CD8-positive, alpha-beta T cell (primary cell): ENCODE measurements at regions of chr12 and their contacts with region 1.

Region 1: DNA sequence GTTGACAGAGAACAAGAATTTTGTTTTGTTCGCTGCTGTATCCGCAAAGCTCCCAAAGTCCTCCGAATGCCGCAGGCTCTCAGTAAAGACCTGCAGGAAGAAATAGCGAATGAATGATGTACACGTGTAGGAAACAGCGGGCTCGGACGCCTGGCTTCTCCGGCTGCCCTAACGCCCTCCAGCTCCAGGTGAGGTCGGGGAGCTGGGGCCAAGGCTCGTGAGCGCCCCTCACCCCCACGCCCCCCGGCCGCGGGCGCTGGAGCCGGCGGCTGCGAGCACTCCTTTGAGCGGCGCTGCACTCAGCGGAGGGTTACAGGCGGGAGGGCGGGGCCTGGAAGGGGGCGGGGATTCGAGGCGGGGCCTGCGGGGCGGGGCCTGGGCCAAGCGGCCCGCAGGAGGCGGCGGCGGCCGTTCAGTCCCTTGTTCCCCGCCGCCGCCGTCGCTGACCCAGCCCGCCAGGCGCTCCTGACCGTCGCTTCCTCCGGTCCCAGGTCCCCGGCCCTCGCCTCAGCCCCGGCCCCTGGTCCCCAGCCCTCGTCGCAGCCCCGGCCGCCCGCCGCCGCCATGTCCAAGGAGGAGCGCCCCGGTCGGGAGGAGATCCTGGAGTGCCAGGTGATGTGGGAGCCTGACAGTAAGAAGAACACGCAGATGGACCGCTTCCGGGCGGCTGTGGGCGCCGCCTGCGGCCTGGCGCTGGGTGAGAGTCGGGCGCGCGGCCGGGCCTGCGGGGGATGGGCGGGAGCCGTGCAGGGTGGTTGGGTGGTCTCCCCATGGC is at the start of gene AACS:
- DNase-seq: peak; percentile 59 to 85 (median 74)
- ATAC-seq: peak; percentile 96
- H3K4me3 ChIP-seq: peak within 1 kb of the TSS; percentile 67 to 98
- H3K4me3 Mint-ChIP-seq: peak within 1 kb of the TSS; percentile 86
- H3K27ac ChIP-seq: peak within 1 kb of the TSS; percentile 25 to 33
- H3K27ac Mint-ChIP-seq: peak within 1 kb of the TSS; percentile 69
- H3K4me1 ChIP-seq: peaks cover 10% of the 10 kb centered on the region
- H3K4me1 Mint-ChIP-seq: peaks cover 21% of the 10 kb centered on the region
- H3K27me3 ChIP-seq: no peaks in the 10 kb centered on the region
- H3K27me3 Mint-ChIP-seq: peaks cover 1% of the 10 kb centered on the region
- CTCF ChIP-seq: no peak
- total RNA-seq, gene AACS: 11.0 to 12.3 TPM

Region 2: DNA sequence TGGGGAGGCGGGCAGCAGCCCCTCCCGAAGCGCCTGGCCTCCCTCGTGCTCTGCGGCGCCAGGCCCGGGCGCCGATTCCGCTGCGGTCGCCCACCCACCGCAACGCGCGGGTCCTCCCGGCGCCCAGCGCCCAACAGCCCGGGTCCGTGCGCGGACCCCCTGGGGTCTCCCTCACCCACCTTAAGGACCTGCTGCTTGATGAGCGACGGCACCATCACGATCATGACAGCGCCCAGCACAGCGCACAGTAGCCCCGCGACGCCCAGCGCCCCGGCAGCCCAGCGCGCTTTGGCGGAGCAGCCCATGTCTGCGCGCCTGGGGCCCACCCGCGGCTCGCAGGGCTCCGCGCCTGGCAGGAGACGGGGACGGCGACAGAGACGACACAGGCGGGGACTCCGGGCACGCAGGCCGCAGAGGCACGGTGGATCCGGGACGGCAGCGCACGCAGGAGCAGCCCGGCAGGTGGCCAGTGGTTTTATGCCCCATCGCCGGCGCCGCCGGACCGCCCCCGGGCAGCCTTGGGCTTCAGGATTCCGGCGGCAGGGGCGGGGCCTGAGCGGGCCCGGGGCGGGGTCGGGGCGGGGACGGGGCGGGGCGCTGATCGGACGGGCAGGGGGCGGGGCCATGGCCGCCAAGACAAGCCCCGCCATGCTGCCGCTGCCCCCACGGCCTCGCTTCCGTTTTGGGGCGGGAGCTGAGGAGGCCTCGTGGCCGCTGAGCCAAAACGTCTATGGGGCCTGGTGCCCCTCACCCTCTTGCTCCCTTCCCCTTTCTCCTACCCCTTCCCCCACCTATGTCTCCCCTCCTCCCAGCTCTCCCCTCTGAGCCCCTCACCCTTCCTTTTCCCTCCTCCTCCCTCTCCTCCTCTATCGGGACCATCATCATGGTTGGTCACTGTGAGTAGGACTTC is 201.5 kb before region 1 on chr12 and contains the start of gene SCARB1:
- CTCF ChIA-PET with region 1: no interaction called
- POLR2A ChIA-PET with region 1: no interaction called
- intact Hi-C with region 1: loop called in 1 of 2 experiments (anchors 2 kb)
- DNase-seq: peak; percentile 63 to 89 (median 73)
- ATAC-seq: peak; percentile 94
- H3K4me3 ChIP-seq: peak within 1 kb of the TSS; percentile 46 to 81
- H3K4me3 Mint-ChIP-seq: peak within 1 kb of the TSS; percentile 81
- H3K27ac ChIP-seq: peak within 1 kb of the TSS; percentile 15 to 46
- H3K27ac Mint-ChIP-seq: peak within 1 kb of the TSS; percentile 57
- H3K4me1 ChIP-seq: peaks cover 15% of the 10 kb centered on the region
- H3K4me1 Mint-ChIP-seq: peaks cover 23% of the 10 kb centered on the region
- H3K27me3 ChIP-seq: no peaks in the 10 kb centered on the region
- H3K27me3 Mint-ChIP-seq: no peaks in the 10 kb centered on the region
- CTCF ChIP-seq: no peak
- total RNA-seq, gene SCARB1: 3.0 to 3.2 TPM

Region 3: GRCh38 chr12:125159683-125160082 is 94.5 kb after region 1 on chr12:
- CTCF ChIA-PET with region 1: no interaction called
- POLR2A ChIA-PET with region 1: no interaction called
- intact Hi-C with region 1: no loop called
- DNase-seq: no peak
- ATAC-seq: no peak
- H3K4me3 ChIP-seq: no peak overlapping the region
- H3K4me3 Mint-ChIP-seq: no peak overlapping the region
- H3K27ac ChIP-seq: no peak overlapping the region
- H3K27ac Mint-ChIP-seq: no peak overlapping the region
- H3K4me1 ChIP-seq: no peaks in the 10 kb centered on the region
- H3K4me1 Mint-ChIP-seq: no peaks in the 10 kb centered on the region
- H3K27me3 ChIP-seq: no peaks in the 10 kb centered on the region
- H3K27me3 Mint-ChIP-seq: peaks cover 1% of the 10 kb centered on the region
- CTCF ChIP-seq: no peak